Posterior cingulate gyrus (tissue), 11 donors: ENCODE measurements at regions of chr12 and their contacts with region 1.

Region 1: DNA sequence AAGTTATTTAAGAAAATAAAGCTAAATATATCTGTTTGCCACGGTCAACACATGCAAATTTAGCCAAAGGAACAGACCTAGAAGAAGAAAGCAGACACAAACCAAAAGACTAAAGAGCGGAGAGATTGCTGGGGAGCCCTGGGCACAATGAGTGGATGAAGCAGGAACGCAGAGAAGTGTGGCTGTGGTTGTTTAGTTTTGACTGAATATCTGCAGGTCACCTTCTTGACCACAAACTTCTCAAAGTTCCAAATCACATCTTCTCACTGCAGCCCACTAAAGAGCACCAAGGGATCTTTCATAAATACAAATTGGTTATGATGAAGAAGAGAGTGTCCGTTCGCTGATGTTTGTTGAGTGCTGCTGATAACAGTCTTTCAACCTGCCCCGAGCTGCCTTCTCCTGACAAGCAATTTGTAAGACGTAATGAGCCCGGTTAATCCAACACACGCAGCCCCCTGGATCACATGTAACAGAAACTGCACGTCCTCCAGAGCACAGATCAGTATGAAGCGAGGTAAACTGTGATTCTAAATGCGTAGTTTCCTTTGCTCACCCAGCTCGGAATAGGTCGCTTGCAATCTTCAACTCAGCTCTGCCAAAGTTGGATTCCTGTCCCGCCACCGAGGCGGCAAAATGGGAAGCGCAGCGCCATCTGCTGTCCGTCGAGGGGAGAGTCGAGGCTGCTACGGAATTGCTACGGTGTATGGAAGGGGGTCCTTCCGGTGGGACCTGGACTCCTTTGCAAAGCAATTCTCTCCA is 120.8 kb downstream of the GXYLT1 start:
- DNase-seq: peak; percentile 49 to 97 (median 80)

Region 2: DNA sequence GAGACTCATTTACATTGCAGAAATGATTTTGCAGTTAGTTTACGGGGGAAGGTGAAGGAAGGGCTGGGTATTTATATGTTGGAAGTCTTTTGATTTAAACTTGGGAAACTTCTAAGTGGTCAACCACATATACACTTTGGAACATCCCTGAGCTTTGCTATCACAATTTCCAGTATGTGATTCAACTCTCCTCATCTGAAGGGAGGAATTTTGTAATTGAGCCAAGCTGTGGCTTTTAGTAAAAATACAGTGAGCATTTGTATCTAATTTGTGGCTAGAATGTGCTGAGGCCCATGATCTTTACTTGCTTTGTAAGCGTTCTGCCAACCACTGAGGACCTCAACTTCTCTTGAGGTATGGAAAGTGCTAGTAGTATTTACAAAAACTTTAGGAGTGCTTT is 1070.8 kb before region 1 on chr12:
- intact Hi-C with region 1: loop called (anchors 10 kb)
- DNase-seq: no peak

Region 3: GRCh38 chr12:41277116-41277945 is 746.6 kb before region 1 on chr12:
- intact Hi-C with region 1: loop called (anchors 1 kb)
- DNase-seq: peak in 5 of 10 donors; percentile 7 to 57 (median 28)

Region 4: GRCh38 chr12:41932470-41932991 is 91.4 kb before region 1 on chr12:
- intact Hi-C with region 1: loop called (anchors 5 kb)
- DNase-seq: peak; percentile 37 to 94 (median 58)

Region 5: GRCh38 chr12:42104087-42104486 is 80.2 kb after region 1 on chr12:
- intact Hi-C with region 1: no loop called
- DNase-seq: no peak

Region 6: DNA sequence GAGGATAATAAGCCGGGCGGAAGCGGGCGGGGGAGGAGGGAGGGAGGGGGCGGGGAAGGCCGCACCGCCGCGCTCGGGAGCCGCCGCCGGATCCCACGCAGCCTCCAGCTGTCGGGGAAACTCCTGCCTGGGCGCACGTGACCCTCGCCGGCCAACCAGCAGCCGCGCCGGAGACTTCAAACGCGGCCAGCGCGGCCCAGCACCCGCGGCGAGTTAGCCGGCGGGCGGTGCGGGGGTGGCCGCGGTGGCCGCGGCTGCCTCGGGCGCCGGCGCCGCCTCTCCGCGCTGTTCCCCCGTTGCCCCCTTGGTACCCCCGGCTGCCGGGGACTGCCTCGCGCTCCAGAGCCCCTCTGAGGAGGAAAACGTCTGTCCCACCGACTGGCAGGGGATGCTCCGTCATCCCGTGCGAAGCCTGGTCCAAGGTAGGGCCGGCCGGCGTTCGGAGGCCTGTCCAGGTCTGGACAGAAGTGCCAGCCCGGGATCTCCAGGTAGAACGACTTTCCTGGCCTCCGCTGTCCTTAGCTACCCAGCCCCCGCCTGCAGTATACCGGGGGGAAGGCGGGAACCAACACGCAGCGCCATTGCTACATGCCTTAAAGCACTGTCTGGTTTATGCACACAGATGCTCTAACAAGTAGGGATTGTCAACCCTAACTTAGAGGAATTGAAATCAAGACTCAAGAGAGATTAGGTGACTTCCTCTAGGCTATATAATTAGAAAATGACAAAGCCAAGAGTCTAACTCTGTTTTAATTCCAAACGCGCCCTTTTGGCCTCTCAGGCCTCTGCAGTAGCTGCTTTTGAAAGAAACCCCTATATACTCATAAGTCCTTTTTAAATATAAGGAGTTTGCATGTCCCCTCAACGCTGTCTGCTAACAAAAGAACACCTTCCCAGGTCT is 214.6 kb after region 1 on chr12 and contains the start of gene YAF2:
- intact Hi-C with region 1: no loop called
- DNase-seq: peak; percentile 90 to 99 (median 92)

Region 7: GRCh38 chr12:42332301-42333285 is 308.7 kb after region 1 on chr12:
- intact Hi-C with region 1: loop called (anchors 10 kb)
- DNase-seq: peak in 1 of 10 donors; percentile 8